ENCODE measurements at regions of chr16 and their contacts with region 1.

Region 1: GRCh38 chr16:31440516-31441184 is 1.9 kb downstream of the ZNF843 start:
- DNase-seq: no peak
- ATAC-seq: no peak

Region 2: DNA sequence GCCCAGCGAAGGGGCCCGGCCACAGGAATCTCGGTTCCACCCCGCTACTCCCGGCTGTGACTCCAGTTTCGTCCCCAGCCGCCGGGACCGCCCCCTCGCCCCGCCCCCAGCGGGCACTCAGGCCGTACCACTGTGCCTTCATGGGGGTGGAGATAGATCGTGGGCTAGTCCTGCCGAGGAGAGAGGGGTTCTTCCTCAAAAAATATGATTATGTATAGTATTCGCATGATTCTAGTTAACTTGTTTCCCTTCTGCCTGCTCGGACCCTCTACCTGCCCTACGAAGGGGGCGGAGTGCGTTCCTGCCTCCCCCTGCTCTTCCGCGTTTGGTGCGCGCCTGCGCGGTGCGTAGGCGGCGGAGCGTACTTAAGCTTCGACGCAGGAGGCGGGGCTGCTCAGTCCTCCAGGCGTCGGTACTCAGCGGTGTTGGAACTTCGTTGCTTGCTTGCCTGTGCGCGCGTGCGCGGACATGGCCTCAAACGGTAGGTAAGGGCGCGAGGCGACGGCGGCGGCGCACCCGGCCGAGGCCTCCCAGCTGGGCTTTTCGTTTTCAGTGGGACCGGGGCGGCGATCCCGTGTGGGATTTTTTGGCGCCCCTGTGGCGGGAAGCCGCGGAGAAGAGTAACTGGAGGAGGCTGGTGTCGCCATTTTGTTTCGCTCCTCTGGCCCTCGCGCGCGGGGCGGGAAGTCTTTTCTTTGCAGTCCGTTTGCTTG is 260.7 kb before region 1 on chr16 and contains the start of gene FUS:
- intact Hi-C with region 1: loop called in 1 of 2 experiments (anchors 5 kb)
- DNase-seq: peak; percentile 93
- ATAC-seq: peak; percentile 83 to 86
- total RNA-seq, gene FUS: 99.5 to 192 TPM